ENCODE measurements at regions of chr1 and their contacts with region 1.

Region 1: DNA sequence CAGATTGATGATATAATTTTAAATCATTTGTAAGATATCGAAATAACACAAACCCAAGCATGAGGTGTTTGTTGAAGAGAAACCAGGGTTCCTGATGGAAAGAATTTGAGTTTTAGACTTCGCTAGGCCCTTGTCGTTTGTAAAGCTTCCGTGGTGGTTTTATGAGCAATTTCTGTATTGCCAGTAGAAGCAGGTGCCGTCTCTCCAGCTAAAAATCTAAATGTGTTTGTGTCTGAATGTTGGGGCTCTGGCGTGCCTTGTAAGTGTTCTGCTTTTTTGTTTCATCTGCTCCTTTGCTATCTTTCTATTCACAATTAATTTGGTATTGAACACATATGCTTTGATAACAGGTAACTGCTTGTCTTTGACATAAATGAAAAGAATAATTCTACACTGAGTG is 27.5 kb downstream of the CHRM3 start:
- DNase-seq: no peak
- ATAC-seq: no peak

Region 2: GRCh38 chr1:239616680-239617079 is 202.8 kb after region 1 on chr1:
- intact Hi-C with region 1: loop called (anchors 10 kb)
- DNase-seq: no peak
- ATAC-seq: no peak

Region 3: DNA sequence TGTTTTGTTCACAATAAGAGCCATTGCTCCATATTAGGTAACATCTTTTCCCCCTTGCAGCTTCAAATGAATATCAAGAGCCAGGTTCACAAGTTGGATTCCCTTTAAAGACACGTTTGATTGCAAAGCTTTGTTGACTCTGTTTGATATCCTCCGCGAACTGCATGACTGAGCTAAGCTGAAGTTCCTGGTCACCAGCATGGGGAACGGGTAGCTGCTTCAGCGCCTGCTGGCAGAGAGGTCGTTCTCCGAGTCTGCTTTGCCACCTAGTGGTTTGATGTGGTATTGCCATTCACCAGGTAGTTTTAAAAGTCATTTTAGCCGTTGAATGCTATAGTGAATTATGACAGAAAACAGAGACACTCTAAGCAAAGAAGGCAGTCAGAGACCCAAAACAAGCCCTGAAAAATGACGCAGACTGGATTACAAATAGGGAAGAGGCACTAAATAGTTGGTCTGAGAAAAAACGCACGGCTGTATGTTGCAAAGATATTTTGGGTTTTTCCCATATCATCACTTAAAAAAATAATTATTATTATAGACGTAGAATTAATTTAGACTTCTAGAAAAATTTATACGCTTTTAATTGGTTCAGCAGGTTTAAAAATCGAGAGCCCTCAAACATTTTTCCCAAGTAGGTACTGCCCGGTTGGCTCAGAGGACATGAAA is 484.3 kb after region 1 on chr1:
- intact Hi-C with region 1: loop called (anchors 10 kb)
- DNase-seq: peak; percentile 70
- ATAC-seq: peak; percentile 81